Activated naive CD4-positive, alpha-beta T cell treated with anti-CD3 and anti-CD28 coated beads for 36 hours (primary cell): ENCODE measurements at regions of chr2 and their contacts with region 1.

Region 1: DNA sequence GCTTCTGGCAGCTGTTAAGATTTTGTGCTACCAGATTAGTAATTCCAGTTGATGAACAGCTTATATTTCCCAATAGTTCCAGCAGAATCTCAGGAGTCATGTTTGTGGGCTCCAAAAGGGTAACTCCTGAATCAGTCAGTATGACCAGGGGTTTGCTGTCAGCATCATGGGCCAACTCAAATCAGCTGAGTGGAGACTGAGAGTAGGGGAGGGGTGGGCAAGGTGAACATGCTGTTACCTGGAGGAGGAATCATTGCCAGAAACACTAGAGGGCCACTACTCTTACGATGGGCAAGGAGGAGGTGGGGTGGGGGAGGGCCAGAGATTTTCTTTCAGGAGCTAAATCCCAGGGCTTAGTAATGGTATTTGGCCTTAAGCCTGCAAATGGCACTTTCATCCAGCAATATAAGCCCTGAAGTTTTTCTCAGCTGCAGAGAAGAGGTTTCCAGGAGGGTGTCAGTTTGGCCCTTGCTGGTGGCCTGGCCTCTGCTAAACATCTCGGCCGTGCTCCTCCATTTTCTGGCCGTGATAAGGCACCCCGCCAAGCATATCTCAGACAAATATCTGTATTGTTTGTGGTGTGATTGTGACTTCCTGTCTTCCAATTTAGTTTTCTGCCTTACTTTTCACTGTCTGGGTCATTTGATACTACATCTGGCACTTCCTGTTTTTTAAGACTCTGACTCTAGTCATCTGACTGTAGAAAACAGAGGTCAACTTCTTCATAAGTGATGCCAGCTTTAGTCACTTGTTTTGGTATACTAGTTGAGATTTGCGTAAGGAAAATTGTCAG is 120.5 kb upstream of the CXCR4 start:
- DNase-seq: peak; percentile 49
- H3K4me3 Mint-ChIP-seq: peak overlapping the region; percentile 10
- H3K27ac Mint-ChIP-seq: peak overlapping the region; percentile 77
- H3K4me1 Mint-ChIP-seq: peaks cover 39% of the 10 kb centered on the region
- H3K27me3 Mint-ChIP-seq: no peaks in the 10 kb centered on the region

Region 2: DNA sequence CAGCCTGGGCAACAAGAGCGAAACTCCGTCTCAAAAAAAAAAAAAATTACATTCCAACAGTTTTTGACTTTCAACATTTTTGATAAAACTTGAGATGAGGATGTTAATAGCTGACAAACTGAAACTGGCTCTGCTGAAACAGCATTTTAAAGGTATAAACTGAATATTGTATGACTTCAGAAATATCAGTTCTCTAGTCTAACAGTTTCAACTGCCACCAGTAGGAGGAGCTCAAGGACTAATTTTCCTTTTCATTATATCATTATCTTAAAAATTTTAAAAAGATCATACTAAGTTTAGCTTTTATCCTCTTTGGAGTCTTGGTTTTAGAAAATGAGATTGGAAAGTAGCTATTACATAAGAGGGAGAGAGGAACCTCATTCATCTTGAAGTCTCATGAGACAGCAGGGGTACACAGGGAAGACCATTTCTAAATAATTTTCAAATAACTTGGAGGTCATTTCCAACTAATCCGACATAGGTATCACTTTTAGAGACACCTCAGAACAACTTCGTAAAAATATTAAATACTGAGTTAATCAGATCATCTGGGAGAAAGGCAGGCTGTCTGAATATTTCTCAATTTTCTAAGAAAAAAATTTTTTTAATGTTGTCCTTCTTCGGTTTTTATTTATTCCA is 324.6 kb before region 1 on chr2:
- CTCF ChIA-PET with region 1: interaction called, 3 read pairs
- intact Hi-C with region 1: loop called (anchors 5 kb)
- DNase-seq: peak; percentile 65
- H3K4me3 Mint-ChIP-seq: no peak overlapping the region
- H3K27ac Mint-ChIP-seq: no peak overlapping the region
- H3K4me1 Mint-ChIP-seq: peaks cover 10% of the 10 kb centered on the region
- H3K27me3 Mint-ChIP-seq: no peaks in the 10 kb centered on the region

Region 3: DNA sequence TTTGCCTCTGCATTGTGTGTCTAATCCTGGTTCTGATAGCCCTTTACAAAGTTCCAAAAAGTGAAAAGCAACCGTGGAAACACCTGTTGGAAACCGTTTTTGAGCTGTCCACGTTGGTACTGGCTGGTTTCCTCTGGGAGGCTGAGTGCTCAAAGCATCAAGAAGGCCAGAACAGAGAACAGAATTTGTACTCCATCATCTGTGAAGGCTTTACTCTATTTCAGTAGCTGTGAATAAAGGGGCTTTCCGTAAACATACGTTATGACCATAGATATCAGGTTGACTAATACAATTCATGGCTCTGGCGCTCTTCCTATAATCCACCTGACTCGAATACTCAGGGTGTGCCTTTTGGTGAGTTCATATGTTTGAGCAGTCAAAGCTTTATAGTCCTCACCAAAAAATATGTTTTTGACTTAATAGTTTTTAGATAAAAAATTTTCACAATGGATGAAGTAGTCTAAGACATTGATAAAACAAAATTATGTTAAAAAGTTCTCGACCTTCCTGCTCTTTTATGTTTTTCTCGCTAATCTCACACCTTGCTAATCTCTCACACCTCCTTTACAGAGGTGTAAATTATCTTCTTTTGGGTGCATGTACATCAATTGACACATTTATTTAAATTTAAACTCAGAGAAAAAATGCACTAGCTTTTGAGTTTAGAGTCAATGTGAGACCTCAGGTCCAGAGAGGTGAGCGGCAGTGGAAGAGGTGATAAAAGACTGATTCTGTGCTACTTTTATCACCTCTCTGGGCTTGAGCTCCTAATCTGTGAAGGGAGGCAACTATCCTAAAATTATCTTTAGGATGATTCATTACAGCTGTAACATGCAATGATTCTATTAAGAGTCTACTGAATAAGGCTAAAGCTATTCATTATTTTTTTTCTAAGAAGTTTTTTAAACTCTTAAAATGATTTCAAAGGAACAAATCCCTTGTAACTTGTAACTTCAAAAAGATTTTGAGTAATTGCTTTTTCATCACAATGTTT is 185.8 kb before region 1 on chr2:
- CTCF ChIA-PET with region 1: interaction called, 5 read pairs
- intact Hi-C with region 1: loop called (anchors 1 kb)
- DNase-seq: peak; percentile 53
- H3K4me3 Mint-ChIP-seq: peak overlapping the region; percentile 53
- H3K27ac Mint-ChIP-seq: peak overlapping the region; percentile 96
- H3K4me1 Mint-ChIP-seq: peaks cover 88% of the 10 kb centered on the region
- H3K27me3 Mint-ChIP-seq: no peaks in the 10 kb centered on the region

Region 4: DNA sequence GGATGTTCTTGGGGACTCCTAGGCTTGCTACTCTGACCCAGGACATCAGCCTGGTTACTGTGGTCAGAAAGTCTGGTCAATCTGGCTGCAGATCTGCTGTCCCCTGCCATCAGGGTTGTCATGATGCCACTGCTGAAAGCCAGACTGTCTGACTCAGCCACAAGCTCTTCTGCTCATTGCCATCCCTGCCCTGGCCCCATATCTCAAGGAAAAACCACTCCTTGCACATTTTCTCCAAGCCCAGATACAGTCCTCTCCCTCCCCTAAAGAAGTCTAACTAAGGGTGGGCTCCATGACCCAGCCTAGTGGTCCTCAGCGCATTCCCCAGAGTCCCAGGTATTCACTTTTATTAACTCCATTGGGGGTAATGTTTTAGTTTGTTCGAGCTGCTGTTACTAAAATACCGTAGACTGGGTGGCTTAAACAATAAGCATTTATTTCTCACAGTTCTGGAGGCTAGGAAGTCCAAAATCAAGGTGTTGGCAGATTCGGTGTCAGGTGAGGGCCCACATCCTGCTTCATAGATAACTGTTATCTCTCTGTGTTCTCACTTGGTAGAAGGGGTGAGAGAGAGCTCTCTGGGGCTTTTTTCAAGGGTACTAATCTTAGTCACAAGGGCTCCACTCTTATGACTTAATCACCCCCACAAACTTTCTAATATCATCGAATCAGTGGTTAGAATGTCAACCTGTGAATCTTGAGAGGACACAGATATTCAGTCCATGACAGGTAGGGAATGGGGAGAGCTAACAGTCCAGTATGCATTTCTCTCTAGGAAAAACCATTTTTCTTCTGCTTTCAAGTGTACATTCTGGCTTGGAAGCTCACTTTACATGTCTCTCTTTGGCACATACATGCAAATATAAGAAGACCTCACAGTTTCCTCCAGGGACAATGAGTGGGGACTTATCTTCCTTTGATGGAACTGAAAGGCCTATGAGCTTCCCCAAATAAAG is 25.8 kb before region 1 on chr2:
- CTCF ChIA-PET with region 1: interaction called, 3 read pairs
- intact Hi-C with region 1: loop called (anchors 1 kb)
- DNase-seq: peak; percentile 67
- H3K4me3 Mint-ChIP-seq: no peak overlapping the region
- H3K27ac Mint-ChIP-seq: peak overlapping the region; percentile 3
- H3K4me1 Mint-ChIP-seq: peaks cover 43% of the 10 kb centered on the region
- H3K27me3 Mint-ChIP-seq: no peaks in the 10 kb centered on the region

Region 5: DNA sequence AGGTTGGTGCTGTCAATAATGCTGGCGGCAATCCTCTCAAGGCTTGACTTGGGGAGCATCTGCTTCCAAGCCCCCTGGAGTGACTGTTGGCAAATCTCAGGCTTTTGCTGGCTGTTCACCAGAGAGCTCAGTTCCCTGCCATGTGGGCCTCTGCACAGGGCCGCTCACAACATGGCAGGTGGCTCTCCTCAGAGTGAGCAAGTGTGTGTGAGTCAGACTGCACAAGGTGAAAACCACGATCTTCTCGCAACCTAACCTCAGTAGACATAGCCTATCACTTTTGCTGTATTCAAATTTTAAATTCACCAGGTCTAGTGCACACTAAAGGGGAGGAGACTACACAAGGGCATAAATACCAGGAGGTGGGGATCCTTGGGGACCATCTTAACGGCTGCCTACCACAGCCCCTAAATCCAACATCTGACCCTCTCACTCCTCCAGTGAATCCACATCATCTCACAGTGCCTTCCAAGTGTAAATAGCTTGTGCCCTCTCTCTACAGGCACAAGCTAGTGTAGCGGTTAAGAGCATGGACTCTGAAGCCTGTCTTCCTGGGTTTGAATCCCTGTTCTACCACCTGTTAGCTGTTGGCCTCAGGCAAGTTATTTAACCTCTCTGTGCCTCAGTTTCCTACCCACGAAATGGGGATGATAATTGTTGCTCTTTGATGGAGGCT is 67.2 kb after region 1 on chr2:
- CTCF ChIA-PET with region 1: no interaction called
- intact Hi-C with region 1: loop called (anchors 1 kb)
- DNase-seq: peak; percentile 85
- H3K4me3 Mint-ChIP-seq: no peak overlapping the region
- H3K27ac Mint-ChIP-seq: peak overlapping the region; percentile 81
- H3K4me1 Mint-ChIP-seq: peaks cover 21% of the 10 kb centered on the region
- H3K27me3 Mint-ChIP-seq: no peaks in the 10 kb centered on the region

Region 6: GRCh38 chr2:136362676-136363390 is 124.4 kb after region 1 on chr2:
- CTCF ChIA-PET with region 1: no interaction called
- intact Hi-C with region 1: loop called (anchors 1 kb)
- DNase-seq: peak; percentile 68
- H3K4me3 Mint-ChIP-seq: no peak overlapping the region
- H3K27ac Mint-ChIP-seq: peak overlapping the region; percentile 42
- H3K4me1 Mint-ChIP-seq: peaks cover 51% of the 10 kb centered on the region
- H3K27me3 Mint-ChIP-seq: peaks cover 4% of the 10 kb centered on the region

Region 7: GRCh38 chr2:136628490-136628889 is 390.0 kb after region 1 on chr2:
- CTCF ChIA-PET with region 1: no interaction called
- intact Hi-C with region 1: no loop called
- DNase-seq: no peak
- H3K4me3 Mint-ChIP-seq: no peak overlapping the region
- H3K27ac Mint-ChIP-seq: no peak overlapping the region
- H3K4me1 Mint-ChIP-seq: no peaks in the 10 kb centered on the region
- H3K27me3 Mint-ChIP-seq: no peaks in the 10 kb centered on the region

Region 8: DNA sequence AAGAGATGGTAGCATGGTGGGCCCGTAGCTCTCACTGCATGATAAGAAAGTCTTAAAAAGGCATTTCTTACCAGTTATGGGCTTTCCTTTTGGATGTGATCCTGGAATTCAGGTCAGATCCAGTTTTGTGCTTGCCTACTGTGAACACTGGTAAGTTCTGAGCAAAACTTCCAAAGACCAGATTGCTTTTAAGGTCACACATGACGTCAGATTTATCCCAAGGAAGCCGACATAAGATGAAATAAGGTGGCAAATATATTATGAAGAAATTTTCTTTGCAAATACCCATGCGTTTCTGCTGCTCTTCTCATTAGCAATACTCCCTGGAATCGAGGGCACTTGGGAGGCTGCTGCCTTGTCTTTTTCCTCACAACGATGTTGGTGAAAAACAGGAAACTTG is 1309.4 kb after region 1 on chr2:
- CTCF ChIA-PET with region 1: no interaction called
- intact Hi-C with region 1: no loop called
- DNase-seq: no peak
- H3K4me3 Mint-ChIP-seq: no peak overlapping the region
- H3K27ac Mint-ChIP-seq: no peak overlapping the region
- H3K4me1 Mint-ChIP-seq: no peaks in the 10 kb centered on the region
- H3K27me3 Mint-ChIP-seq: no peaks in the 10 kb centered on the region